Mammary epithelial cell (primary cell): ENCODE measurements at regions of chr4 and their contacts with region 1.

Region 1: DNA sequence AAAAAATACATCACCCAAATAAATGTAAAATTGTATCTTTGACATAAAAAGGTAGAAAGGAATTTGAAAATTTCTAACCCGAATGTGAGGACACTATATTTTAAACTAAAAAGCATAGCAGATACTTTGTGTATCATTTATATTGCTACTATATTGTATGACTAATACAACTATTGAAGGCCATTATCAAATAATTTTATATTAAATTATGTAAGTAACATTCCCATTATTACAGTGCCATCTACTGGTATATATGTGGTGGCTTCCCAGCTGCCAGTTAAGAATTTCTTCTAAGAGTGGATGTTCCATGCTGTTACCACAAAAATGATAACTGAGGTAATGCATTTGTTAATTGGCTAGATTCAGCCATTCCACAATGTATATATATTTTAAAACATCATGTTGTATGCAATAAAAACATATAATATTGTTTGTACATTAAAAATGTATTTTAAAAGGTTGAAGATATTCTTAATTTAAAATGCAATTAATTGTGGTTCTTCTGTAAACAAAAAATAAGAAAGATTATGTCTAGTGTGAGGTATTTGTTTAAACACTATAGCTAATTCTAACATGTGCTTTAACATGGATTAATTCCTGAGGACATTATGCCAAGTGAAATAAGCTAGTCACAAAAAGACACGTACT is 65.3 kb downstream of the EGF start:
- DNase-seq: peak; percentile 40
- H3K4me3 ChIP-seq: no peak overlapping the region
- H3K27ac ChIP-seq: no peak overlapping the region
- H3K4me1 ChIP-seq: peaks cover 18% of the 10 kb centered on the region
- H3K27me3 ChIP-seq: no peaks in the 10 kb centered on the region
- CTCF ChIP-seq: peak; percentile 63 to 64

Region 2: DNA sequence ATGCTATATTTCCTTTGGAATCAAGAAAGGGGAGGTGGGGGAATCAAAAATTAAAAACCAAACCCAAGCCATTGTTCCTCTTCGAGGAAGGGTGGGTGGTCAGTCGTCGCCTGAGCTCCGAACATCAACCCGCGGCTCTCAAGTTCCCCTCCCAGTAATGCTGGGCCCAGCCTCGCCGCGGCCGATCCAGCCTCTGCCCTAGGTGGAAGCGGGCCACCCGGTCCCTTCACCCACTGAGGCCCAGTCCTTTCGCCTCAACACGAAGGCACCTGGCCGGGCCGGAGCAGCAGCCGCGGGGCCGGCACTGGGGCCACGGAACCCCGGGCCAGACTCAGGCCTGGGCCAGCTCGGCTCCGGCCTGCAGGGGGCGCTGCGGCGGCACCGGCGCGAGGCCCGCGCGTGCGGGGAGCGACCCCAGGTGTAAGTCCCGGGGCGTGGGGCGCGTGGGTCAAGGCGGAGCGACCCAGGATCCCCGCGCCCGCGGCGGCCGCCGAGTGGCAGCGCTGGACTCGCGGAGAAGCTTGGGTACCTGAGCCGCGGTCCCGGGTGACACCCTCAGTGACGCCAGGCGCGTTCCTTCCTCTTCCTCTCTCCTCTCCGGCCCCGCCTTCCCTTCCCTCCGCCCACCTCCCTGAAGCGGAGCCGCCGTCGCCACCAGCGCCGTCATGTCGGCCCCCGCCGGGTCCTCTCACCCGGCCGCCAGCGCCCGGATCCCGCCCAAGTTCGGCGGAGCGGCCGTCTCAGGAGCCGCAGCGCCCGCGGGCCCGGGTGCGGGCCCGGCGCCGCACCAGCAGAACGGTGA is 544.6 kb before region 1 on chr4 and contains the start of gene SEC24B:
- CTCF ChIA-PET with region 1: interaction called, 8 read pairs
- dilution Hi-C with region 1: loop called (anchors 10 kb)
- in situ Hi-C with region 1: loop called (anchors 10 kb)
- intact Hi-C with region 1: no loop called
- DNase-seq: peak; percentile 81
- H3K4me3 ChIP-seq: peak within 1 kb of the TSS; percentile 79 to 94 (median 86)
- H3K27ac ChIP-seq: peak within 1 kb of the TSS; percentile 86
- H3K4me1 ChIP-seq: peaks cover 19% of the 10 kb centered on the region
- H3K27me3 ChIP-seq: no peaks in the 10 kb centered on the region
- CTCF ChIP-seq: peak; percentile 53 to 59
- total RNA-seq, gene SEC24B: 22.0 to 34.7 TPM

Region 3: GRCh38 chr4:109559983-109560686 is 417.8 kb before region 1 on chr4 and contains the start of gene MCUB:
- CTCF ChIA-PET with region 1: no interaction called
- dilution Hi-C with region 1: no loop called
- in situ Hi-C with region 1: no loop called
- intact Hi-C with region 1: loop called (anchors 10 kb)
- DNase-seq: peak; percentile 90
- H3K4me3 ChIP-seq: peak within 1 kb of the TSS; percentile 64 to 68 (median 68)
- H3K27ac ChIP-seq: peak within 1 kb of the TSS; percentile 65
- H3K4me1 ChIP-seq: peaks cover 12% of the 10 kb centered on the region
- H3K27me3 ChIP-seq: no peaks in the 10 kb centered on the region
- CTCF ChIP-seq: no peak
- total RNA-seq, gene MCUB: 8.3 to 20.3 TPM

Region 4: DNA sequence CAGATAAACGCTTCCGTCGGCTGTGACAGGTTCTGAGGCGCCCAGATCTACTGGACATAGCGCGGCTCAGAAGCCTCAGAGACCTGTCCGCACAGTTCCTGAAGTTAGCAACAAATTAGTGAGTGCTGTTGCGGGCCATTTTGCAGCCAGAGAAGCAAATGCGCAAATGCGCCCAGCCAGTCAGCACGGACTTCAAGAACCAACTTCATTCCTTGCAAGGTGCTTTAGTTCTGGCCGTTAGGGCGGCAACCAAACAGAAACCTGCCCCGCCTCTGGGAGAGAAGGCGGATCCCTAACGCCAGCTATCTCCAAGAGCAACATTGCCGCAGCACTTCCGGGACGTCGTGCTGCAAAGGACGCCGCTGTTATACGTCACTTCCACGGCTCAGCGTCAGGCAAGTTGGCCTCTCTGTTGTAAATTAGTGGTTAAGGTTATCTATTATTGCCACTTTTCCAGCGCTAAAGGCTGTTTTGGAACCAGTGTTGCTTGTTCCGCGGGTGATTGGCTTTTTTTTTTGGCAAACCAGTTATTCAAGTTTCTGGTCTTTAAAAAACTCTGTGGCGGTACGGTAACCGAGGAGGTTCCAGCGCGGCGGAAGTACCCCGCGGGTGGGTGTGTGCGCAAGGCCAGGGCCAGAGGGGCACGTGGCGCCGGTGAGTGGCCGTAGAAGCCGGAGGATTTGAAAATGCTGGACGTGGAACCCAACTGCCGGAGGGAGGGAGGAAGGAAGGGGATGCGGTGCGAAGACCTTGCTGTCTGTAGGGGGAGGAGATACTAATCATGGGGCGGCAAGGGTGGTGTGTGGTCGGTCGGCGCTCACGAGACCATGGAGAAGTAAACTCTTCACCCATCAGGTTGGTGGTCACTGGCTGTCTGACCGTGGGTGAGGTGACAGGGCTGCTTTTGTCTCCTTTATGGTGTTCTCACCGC is 162.6 kb before region 1 on chr4 and contains the start of gene GAR1:
- CTCF ChIA-PET with region 1: no interaction called
- dilution Hi-C with region 1: no loop called
- in situ Hi-C with region 1: loop called (anchors 5 to 10 kb)
- intact Hi-C with region 1: loop called (anchors 5 kb)
- DNase-seq: peak; percentile 93
- H3K4me3 ChIP-seq: peak within 1 kb of the TSS; percentile 72 to 87 (median 82)
- H3K27ac ChIP-seq: peak within 1 kb of the TSS; percentile 87
- H3K4me1 ChIP-seq: no peaks in the 10 kb centered on the region
- H3K27me3 ChIP-seq: no peaks in the 10 kb centered on the region
- CTCF ChIP-seq: no peak
- total RNA-seq, gene GAR1: 3.3 to 22.7 TPM